ENCODE measurements at regions of chr1 and their contacts with region 1.

Region 1: DNA sequence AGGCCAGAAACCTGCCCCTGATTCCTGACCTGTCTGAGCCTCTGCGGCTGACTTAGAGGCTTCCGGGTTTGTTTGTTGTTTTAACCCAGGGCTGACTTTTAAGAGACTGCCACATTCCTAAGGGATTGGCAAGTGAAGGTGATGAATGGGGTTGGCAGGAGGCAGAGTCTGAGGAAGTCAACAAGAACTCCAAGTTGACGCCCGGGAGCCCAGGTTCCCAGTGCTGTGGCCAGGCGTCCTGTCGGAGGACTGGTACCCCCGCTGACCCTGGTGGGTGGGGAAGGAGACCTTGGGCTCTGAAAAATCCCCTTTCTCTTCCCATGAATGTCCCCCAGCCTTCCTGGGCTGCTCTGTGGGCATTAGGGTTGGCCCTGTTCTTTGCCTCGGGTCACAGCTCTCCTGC is 19.7 kb upstream of the EPS8L3 start:
- DNase-seq: no peak
- ATAC-seq: peak; percentile 25

Region 2: DNA sequence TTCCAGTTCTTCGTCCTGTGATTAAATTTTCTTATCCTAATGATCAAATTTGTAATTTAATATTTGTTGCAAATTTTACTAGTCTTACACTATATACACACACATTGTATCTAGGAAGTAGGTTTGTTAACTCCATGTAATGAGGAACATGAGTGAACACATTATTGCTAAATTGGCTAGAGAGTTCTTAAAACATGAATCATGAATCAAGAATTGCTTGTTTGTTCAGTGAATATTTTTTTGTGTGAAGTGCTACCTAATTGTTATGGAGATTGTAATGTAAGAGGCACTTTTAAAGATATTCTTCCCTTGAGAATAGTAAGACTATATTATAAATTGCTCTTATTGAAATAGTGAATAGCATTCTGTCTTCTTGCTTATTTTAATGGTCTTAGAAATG is 902.1 kb before region 1 on chr1:
- intact Hi-C with region 1: loop called (anchors 5 kb)
- DNase-seq: no peak
- ATAC-seq: no peak

Region 3: GRCh38 chr1:109712321-109712864 is 71.0 kb before region 1 on chr1:
- intact Hi-C with region 1: no loop called
- DNase-seq: no peak
- ATAC-seq: peak; percentile 56

Region 4: DNA sequence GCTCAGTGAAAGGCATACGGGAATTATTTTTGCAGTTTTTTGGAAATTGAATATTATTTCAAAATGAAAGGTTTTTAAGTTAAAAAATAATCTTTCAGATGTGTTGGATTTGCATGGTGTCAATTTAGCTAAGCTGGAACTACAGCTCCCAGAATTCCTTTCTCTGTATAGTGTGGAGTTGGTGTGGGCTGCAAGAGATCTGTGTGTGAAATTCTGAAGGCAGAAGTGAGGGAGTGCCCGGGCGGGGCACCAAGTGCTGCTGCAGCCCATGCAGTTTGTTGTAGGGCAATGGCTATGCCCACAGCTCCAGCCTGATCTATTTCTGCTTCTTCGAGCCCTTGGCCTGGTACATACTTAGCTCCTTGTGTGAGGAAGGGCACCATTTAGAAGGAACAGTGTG is 66.8 kb after region 1 on chr1:
- intact Hi-C with region 1: no loop called
- DNase-seq: no peak
- ATAC-seq: no peak